ENCODE measurements at regions of chr22 and their contacts with region 1.

Region 1: GRCh38 chr22:39319270-39320022 is at the start of gene RPL3:
- DNase-seq: peak; percentile 90 to 99
- H3K4me3 ChIP-seq: peak within 1 kb of the TSS; percentile 95 to 99 (median 98)
- H3K27ac ChIP-seq: peak within 1 kb of the TSS; percentile 97
- H3K4me1 ChIP-seq: peaks cover 0 to 15% (median 3%) of the 10 kb centered on the region in 4 experiments; a peak in 6 of 7 replicates
- H3K27me3 ChIP-seq: no peaks in the 10 kb centered on the region
- CTCF ChIP-seq: peak in 2 of 3 experiments; percentile 5 to 12; a peak in 3 of 4 replicates
- EP300 ChIP-seq: peak in 1 of 2 experiments; percentile 46; a peak in 1 of 3 replicates
- POLR2A ChIP-seq: peak; percentile 99 to 100
- RAD21 ChIP-seq: no peak
- total RNA-seq, gene RPL3: 2,801 and 2,865 TPM in 2 replicates

Region 2: DNA sequence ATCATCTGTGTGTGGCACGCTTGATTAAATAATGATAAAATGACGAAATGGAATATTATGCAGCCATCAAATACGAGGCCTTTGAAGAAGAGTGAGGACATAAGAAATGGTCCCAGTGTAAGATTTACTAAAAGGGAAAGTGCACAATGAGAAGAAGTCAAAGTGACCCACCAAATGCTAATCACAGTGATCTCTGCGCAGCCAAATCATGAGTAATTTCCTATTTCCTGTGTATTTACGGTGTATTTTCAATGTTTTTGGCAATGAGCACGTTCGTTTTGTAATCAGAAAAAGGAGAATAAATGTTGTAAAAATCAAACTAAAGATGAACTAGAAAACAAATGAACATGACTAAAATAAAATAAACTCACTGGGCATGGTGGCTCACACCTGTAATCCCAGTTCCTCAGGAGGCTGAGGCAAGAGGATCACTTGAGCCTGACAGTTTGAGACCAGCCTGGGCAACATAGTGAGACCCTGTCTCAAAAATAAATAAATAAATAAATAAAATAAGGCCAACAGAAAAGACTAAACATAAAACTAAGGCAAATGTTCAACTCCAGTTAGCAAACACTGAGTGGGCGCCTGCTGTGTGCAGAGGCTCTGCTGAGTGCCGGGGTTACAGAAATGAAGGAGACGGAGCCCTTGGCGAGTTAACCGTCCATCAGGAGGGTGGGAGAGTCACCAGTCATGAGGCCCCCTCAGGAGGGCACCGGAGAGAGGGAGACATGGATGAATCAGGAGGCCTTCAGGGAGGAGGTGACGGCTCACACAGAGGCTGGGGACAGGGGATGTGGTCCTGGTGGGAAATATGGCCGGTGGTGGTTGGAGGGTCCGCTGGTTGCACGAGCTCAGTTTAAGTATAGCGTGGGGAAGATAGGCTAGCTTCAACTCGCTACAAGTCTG is 141.0 kb before region 1 on chr22:
- CTCF ChIA-PET with region 1: interaction called, 12 read pairs
- POLR2A ChIA-PET with region 1: interaction called, 313 read pairs
- DNase-seq: no peak
- H3K4me3 ChIP-seq: no peak overlapping the region
- H3K27ac ChIP-seq: no peak overlapping the region
- H3K4me1 ChIP-seq: peaks cover 19 to 49% (median 44%) of the 10 kb centered on the region in 4 experiments
- H3K27me3 ChIP-seq: no peaks in the 10 kb centered on the region
- CTCF ChIP-seq: no peak
- EP300 ChIP-seq: no peak
- POLR2A ChIP-seq: no peak
- RAD21 ChIP-seq: no peak

Region 3: DNA sequence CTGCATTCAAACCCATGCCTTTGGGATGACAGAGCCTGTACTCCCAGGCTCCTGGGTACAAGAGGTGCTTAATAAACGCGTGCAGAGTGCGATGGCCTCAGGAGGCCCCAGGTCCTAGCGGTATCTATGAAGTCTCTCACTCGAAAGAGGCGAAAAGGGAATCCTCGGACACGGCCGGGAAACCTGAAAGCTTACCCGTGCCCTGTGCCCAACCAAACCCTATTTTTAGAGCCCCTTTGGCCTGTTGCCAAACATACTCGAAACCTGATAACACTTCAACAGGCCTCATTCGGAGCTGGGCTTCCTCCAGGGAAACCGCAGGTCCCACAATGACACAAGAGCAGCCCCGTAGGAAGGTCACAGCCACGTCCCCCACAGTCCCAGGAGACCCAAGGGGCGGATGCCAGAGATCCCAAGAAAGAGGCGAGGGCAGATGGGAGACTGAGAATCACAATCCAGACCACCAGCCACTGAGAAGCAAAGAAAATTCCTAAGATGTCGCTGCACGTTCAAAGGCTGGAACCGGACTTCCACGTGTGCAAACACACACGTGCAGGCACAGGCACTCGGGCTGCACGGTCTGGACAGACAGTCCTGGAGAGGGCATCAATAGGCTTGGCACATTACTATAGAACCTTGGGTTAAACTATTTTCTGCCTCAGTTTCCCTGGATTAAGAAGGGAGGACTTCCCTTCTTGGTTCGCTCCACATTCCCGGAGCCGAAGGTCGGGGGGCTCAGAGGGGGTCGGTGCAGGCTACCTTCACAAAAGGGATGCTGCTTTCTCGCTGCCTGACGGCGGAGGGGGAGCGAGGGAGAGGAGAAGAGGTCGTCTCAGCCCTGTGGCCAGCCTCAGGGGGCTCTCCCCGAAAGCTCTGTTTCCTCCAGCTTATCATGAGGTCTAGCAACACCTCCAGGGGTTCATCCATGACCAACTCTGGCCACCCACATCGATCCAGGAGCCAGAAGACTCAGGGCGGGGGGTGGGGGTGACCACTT is 82.8 kb before region 1 on chr22:
- CTCF ChIA-PET with region 1: interaction called, 8 read pairs
- POLR2A ChIA-PET with region 1: interaction called, 89 read pairs
- DNase-seq: no peak
- H3K4me3 ChIP-seq: no peak overlapping the region
- H3K27ac ChIP-seq: no peak overlapping the region
- H3K4me1 ChIP-seq: peaks cover 4 to 33% (median 28%) of the 10 kb centered on the region in 4 experiments
- H3K27me3 ChIP-seq: peaks cover 0 to 28% (median 16%) of the 10 kb centered on the region in 4 experiments; a peak in 5 of 7 replicates
- CTCF ChIP-seq: no peak
- EP300 ChIP-seq: no peak
- POLR2A ChIP-seq: no peak
- RAD21 ChIP-seq: no peak

Region 4: DNA sequence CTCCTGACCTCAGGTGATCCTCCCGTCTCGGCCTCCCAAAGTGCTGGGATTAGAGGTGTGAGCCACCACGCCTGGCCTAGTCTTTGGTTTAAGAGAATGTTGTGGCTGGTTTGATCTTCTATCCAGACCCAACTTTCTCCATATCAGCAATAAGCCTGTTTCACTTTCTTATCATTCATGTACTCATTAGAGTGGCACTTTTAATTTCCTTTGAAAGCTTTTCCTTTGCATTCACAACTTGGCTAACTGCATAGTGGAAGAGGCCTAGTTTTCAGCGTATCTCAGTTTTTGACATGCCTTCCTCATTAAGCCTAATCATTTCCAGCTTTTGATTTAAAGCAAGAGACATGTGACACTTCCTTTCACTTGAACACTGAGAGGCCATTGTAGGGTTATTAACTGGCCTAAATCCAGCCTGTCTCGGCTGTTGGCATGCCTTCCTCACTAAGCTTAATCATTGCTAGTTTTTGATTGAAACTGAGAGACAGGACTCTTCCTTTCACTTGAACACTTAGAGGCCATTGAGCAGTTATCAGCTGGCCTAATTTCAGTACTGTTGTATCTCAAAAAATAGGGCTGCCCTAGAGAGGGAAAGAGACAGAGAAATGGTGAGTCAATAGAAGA is 13.1 kb after region 1 on chr22:
- CTCF ChIA-PET with region 1: interaction called, 28 read pairs
- POLR2A ChIA-PET with region 1: interaction called, 472 read pairs
- DNase-seq: no peak
- H3K4me3 ChIP-seq: no peak overlapping the region
- H3K27ac ChIP-seq: no peak overlapping the region
- H3K4me1 ChIP-seq: no peaks in the 10 kb centered on the region
- H3K27me3 ChIP-seq: no peaks in the 10 kb centered on the region
- CTCF ChIP-seq: no peak
- EP300 ChIP-seq: no peak
- POLR2A ChIP-seq: no peak
- RAD21 ChIP-seq: no peak

Region 5: GRCh38 chr22:39405346-39406085 is 86.1 kb after region 1 on chr22:
- CTCF ChIA-PET with region 1: interaction called, 4 read pairs
- POLR2A ChIA-PET with region 1: interaction called, 42 read pairs
- DNase-seq: no peak
- H3K4me3 ChIP-seq: no peak overlapping the region
- H3K27ac ChIP-seq: no peak overlapping the region
- H3K4me1 ChIP-seq: peaks cover 0 to under 1% (median under 1%) of the 10 kb centered on the region in 4 experiments; a peak in 2 of 7 replicates
- H3K27me3 ChIP-seq: no peaks in the 10 kb centered on the region
- CTCF ChIP-seq: no peak
- EP300 ChIP-seq: no peak
- POLR2A ChIP-seq: no peak
- RAD21 ChIP-seq: no peak

Region 6: GRCh38 chr22:39471381-39472141 is 152.1 kb after region 1 on chr22:
- CTCF ChIA-PET with region 1: interaction called, 4 read pairs
- POLR2A ChIA-PET with region 1: interaction called, 18 read pairs
- DNase-seq: no peak
- H3K4me3 ChIP-seq: no peak overlapping the region; a peak in 1 of 8 replicates
- H3K27ac ChIP-seq: no peak overlapping the region
- H3K4me1 ChIP-seq: peaks cover 16 to 51% (median 39%) of the 10 kb centered on the region in 4 experiments
- H3K27me3 ChIP-seq: no peaks in the 10 kb centered on the region
- CTCF ChIP-seq: no peak
- EP300 ChIP-seq: no peak
- POLR2A ChIP-seq: no peak
- RAD21 ChIP-seq: no peak

Measured in H1 (cell line).